Right cardiac atrium (tissue), 5 donors: ENCODE measurements at regions of chr14 and their contacts with region 1.

Region 1: DNA sequence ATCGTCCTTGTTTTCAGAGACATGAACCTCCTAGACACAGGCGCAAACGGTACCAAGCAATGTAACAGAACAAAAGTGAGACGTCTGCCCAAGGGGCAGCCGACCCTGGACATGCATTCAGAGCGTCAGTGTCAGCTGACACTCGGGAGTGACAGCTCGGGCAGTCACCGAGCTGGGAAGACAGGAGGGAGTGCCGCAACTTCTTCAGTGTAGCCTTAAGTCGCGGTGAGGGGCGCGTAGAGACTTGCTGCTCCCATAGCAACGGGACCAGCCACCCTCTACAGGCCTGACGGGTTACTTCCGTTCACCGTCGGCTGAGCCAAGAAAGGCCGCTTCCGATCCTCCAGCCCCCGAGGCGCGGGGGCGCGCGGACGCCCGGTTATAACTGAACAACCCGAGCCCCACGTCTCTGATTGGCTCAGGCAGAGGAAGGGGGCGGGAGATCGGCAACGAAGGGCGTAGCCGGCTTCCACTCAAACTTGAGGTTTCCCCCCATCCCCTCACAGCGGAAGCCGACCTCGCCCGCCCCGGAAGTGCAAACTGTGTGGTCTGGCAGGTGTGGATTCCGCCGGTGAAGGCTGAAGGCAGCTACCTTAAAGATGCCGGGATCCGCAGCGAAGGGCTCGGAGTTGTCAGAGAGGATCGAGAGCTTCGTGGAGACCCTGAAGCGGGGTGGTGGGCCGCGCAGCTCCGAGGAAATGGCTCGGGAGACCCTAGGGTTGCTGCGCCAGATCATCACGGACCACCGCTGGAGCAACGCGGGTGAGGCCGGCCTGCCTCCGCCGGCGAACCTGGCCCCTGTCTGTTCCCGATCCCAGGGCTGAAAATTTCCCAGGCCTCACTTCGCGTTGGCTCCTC is at the start of gene EIF2B2:
- DNase-seq: peak; percentile 97 to 99 (median 99)
- ATAC-seq: peak; percentile 100
- H3K4me3 ChIP-seq: peak within 1 kb of the TSS; percentile 86
- H3K27ac ChIP-seq: peak within 1 kb of the TSS; percentile 82
- H3K4me1 ChIP-seq: peaks cover 3% of the 10 kb centered on the region
- H3K27me3 ChIP-seq: no peaks in the 10 kb centered on the region
- total RNA-seq, gene EIF2B2: 29.4 to 39.9 (median 35.9) TPM

Region 2: GRCh38 chr14:74945823-74946682 is 56.6 kb before region 1 on chr14:
- intact Hi-C with region 1: loop called in 1 of 4 experiments (anchors 10 kb)
- DNase-seq: peak; percentile 77 to 91 (median 88)
- ATAC-seq: peak; percentile 77 to 81
- H3K4me3 ChIP-seq: no peak overlapping the region
- H3K27ac ChIP-seq: no peak overlapping the region
- H3K4me1 ChIP-seq: peaks cover 14% of the 10 kb centered on the region
- H3K27me3 ChIP-seq: no peaks in the 10 kb centered on the region

Region 3: GRCh38 chr14:75063407-75064213 is 61.0 kb after region 1 on chr14 and contains the start of gene ACYP1:
- intact Hi-C with region 1: loop called in 1 of 4 experiments (anchors 10 kb)
- DNase-seq: peak; percentile 92 to 97 (median 97)
- ATAC-seq: peak; percentile 97
- H3K4me3 ChIP-seq: peak within 1 kb of the TSS; percentile 85
- H3K27ac ChIP-seq: peak within 1 kb of the TSS; percentile 43
- H3K4me1 ChIP-seq: no peaks in the 10 kb centered on the region
- H3K27me3 ChIP-seq: no peaks in the 10 kb centered on the region
- total RNA-seq, gene ACYP1: 10.2 to 14.2 (median 11.5) TPM